ENCODE measurements at regions of chr1 and their contacts with region 1.

Region 1: GRCh38 chr1:15345711-15346355 is 63.9 kb upstream of the EFHD2 start:
- H3K4me3 Mint-ChIP-seq: peak overlapping the region; percentile 39
- H3K27ac Mint-ChIP-seq: peak overlapping the region; percentile 93
- H3K4me1 Mint-ChIP-seq: peaks cover 92% of the 10 kb centered on the region
- H3K27me3 Mint-ChIP-seq: peaks cover 9% of the 10 kb centered on the region

Region 2: DNA sequence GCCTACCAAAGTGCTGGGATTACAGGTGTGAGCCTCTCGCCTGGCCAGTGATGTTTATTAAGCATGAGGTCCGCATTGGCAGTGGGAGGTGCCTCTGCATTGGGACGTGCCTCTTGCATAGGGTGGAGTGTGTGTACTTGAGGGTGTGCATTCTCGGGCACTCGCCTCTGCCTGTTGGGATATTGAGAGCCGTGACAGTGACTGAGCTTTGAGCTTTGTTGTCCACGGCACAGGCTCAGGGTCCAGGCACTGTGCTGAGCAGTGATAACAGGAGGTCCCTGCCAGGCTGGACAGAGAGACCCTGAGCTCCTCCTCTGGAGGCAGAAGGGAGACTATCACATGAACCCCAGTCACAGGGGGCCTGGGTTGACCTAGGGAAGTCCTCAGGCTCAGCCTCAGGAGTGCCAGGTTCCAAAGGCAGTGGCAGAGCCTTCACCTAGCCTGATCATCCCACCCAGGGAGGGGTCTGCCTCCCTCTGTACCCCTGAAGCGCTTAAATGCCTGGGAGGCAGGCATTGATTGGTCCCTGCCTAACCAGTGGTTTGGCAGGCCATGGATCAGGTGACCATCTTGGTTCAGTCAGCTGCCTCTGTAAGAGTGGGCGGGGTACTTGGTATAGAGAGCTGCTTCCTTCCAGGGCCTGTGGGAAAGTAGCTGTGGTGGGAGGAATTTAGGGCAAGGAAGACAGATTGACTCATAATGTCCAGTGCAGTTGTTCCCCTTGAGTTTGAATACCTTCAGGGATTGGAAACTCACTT is 406.1 kb before region 1 on chr1:
- intact Hi-C with region 1: no loop called
- H3K4me3 Mint-ChIP-seq: no peak overlapping the region
- H3K27ac Mint-ChIP-seq: no peak overlapping the region
- H3K4me1 Mint-ChIP-seq: peaks cover 10% of the 10 kb centered on the region
- H3K27me3 Mint-ChIP-seq: peaks cover 8% of the 10 kb centered on the region

Region 3: GRCh38 chr1:15328351-15329103 is 17.3 kb before region 1 on chr1:
- intact Hi-C with region 1: loop called (anchors 2 kb)
- H3K4me3 Mint-ChIP-seq: peak overlapping the region; percentile 4
- H3K27ac Mint-ChIP-seq: peak overlapping the region; percentile 92
- H3K4me1 Mint-ChIP-seq: peaks cover 88% of the 10 kb centered on the region
- H3K27me3 Mint-ChIP-seq: peaks cover 11% of the 10 kb centered on the region

Region 4: GRCh38 chr1:15362737-15363128 is 16.9 kb after region 1 on chr1:
- intact Hi-C with region 1: loop called (anchors 2 kb)
- H3K4me3 Mint-ChIP-seq: no peak overlapping the region
- H3K27ac Mint-ChIP-seq: peak overlapping the region; percentile 58
- H3K4me1 Mint-ChIP-seq: peaks cover 33% of the 10 kb centered on the region
- H3K27me3 Mint-ChIP-seq: peaks cover 34% of the 10 kb centered on the region